ENCODE measurements at regions of chr12 and their contacts with region 1.

Region 1: GRCh38 chr12:122752464-122753318 is at the start of gene DENR:
- DNase-seq: peak; percentile 96
- H3K4me3 ChIP-seq: peak within 1 kb of the TSS; percentile 84 to 91
- H3K27ac ChIP-seq: peak within 1 kb of the TSS; percentile 72 to 85
- H3K4me1 ChIP-seq: peaks cover 12 to 13% of the 10 kb centered on the region in 2 experiments; a peak in 3 of 4 replicates
- H3K27me3 ChIP-seq: no peaks in the 10 kb centered on the region
- CTCF ChIP-seq: peak; percentile 84
- EP300 ChIP-seq: peak in 1 of 2 experiments; percentile 25; a peak in 1 of 4 replicates
- RAD21 ChIP-seq: peak; percentile 81
- polyA plus RNA-seq, gene DENR: 19.6 and 23.2 TPM in 2 replicates

Region 2: GRCh38 chr12:122642009-122642408 is 110.7 kb before region 1 on chr12:
- CTCF ChIA-PET with region 1: interaction called, 15 read pairs
- POLR2A ChIA-PET with region 1: no interaction called
- DNase-seq: no peak
- H3K4me3 ChIP-seq: no peak overlapping the region
- H3K27ac ChIP-seq: no peak overlapping the region
- H3K4me1 ChIP-seq: no peaks in the 10 kb centered on the region
- H3K27me3 ChIP-seq: no peaks in the 10 kb centered on the region
- CTCF ChIP-seq: no peak
- EP300 ChIP-seq: no peak
- RAD21 ChIP-seq: no peak

Measured in SK-N-SH (cell line).